Ascending aorta (tissue), 2 donors: ENCODE measurements at regions of chrX and their contacts with region 1.

Region 1: DNA sequence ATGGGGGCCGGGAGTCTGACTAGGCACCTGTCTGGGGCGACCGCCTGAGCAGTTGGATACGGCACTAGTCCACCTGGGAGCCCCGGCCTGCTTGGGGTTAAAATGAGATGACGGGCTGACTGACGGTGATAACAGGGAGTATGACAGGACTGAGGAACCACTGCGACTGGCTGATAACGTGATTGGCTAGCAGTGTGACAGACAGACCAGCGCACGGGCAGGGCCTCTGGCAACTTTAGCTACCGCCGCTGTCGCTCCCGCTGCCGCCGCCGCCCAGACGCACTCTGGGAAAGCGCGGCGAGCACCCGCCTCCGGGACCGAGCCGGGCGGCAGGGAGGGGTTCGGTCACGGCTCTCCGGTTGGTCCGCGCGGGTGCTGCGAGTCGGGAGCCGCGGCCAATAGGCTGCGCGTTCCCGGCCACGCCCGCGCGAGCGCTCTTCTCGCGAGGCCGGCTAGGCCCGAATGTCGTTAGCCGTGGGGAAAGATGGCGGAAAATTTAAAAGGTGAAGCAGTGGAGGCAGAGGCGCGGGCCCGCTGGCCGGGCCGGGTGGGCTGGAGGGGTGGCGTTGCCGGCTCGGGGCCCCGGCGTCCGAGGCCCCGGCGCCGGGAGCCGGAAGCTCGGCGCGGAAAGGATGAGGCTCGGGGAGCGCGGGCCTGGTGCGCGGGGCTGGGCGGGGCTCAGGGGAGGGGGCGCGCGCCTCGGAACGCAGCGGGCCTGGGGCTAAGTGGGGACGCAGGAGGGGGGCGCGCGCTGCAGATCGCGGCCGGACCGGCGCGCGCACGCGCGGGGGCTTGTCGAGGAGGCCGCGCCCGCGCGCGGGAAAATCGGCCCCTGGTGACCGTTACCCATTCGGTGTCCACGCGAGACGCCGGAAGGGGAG is at the start of gene SUV39H1:
- DNase-seq: peak; percentile 47 to 93
- H3K4me3 ChIP-seq: peak within 1 kb of the TSS; percentile 77 to 88
- H3K27ac ChIP-seq: peak within 1 kb of the TSS; percentile 87 to 92
- H3K4me1 ChIP-seq: no peaks in the 10 kb centered on the region
- H3K27me3 ChIP-seq: no peaks in the 10 kb centered on the region
- CTCF ChIP-seq: no peak
- total RNA-seq, gene SUV39H1: 0.21 TPM

Region 2: DNA sequence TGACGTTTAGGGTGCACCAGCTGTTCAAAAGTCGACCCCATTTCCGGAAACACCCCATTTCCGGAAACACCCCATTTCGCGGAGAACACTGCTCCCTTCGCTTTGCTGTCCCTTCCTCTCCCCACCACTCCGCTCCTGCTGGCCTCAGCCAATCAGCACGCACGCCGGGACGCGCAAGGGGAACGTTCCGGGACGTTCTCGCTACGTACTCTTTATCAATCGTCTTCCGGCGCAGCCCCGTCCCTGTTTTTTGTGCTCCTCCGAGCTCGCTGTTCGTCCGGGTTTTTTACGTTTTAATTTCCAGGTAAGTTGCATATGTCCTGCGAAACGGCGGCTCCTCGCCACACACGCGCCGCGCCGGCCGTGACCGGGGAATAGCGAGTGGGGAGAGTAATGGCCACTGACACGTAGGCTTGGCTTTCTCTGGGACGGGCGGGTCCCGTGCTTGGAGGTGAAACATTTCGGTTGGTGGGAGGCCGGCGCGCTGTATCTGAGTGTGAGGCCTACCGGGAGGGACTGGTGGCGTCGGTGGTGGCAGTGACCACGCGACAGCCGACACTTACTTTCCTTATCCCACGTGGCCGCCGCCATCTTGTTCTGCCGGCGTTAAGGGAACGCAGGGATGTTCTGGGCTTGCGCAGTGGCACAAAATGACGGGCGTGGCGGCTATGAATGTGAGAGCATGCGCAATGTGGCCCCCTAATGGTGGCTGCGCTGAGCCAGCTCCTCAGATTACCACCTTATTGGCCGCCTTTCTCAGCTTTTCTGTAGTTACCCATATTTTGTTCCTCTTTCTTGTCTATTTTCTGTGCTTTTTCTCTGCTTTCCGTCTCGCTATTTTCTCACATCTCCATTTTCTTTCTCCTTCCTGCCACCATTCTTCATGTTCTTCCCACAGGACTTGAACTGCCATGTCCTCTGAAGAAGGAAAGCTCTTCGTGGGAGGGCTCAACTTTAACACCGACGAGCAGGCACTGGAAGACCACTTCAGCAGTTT is 122.0 kb before region 1 on chrX and contains the start of gene RBM3:
- intact Hi-C with region 1: loop called (anchors 10 kb)
- DNase-seq: peak; percentile 77 to 95
- H3K4me3 ChIP-seq: peak within 1 kb of the TSS; percentile 71 to 78
- H3K27ac ChIP-seq: peak within 1 kb of the TSS; percentile 96 to 99
- H3K4me1 ChIP-seq: peaks cover 0 to 7% of the 10 kb centered on the region in 2 donors
- H3K27me3 ChIP-seq: no peaks in the 10 kb centered on the region
- CTCF ChIP-seq: peak in 2 of 3 experiments; percentile 30 to 36
- total RNA-seq, gene RBM3: 119 TPM

Region 3: DNA sequence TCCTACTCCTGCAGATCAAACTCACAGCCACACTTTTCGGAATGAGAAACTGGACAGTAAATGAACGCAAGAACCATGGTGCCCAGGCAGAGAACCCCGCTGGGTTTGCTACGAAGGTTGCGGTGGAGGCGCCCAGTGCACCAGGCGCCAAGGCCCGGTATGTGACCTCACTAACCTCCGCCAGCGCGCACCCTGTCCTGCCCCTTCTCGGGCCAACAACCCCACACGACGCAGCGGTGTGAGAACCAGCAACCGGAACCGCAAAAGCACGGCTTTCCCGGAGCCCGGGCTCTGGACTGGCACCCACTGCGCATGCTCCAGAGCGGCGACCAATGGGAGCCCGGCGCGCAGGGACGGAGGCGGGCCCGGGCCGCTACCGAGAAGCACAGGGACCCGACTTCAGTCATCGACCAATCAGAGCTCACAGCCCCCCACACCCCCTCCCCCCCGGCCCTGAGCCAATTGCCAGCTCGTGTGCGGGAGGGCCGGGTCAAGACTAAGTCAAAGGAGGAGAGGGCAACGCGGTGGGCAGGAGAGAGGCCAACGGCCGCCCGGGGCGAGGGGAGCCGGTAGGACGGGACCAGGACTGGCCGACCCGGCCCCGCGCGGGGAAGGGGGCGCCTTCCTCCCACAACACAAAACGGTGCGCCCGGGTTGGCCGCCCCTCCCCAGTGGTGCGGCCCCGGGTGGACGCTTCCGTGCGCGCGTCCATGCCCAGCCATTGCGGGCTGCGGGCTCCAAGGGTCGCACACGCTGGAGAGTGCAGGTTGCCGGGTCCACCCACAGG is 20.2 kb before region 1 on chrX:
- intact Hi-C with region 1: loop called (anchors 1 kb)
- DNase-seq: peak; percentile 61 to 91
- H3K4me3 ChIP-seq: peak overlapping the region; percentile 65 to 79
- H3K27ac ChIP-seq: peak overlapping the region; percentile 74 to 76
- H3K4me1 ChIP-seq: peaks cover 0 to 4% of the 10 kb centered on the region in 2 donors
- H3K27me3 ChIP-seq: no peaks in the 10 kb centered on the region
- CTCF ChIP-seq: no peak

Region 4: GRCh38 chrX:48737213-48737938 is 40.8 kb after region 1 on chrX:
- intact Hi-C with region 1: loop called (anchors 1 kb)
- DNase-seq: peak; percentile 67 to 94
- H3K4me3 ChIP-seq: peak overlapping the region; percentile 56 to 67
- H3K27ac ChIP-seq: peak overlapping the region; percentile 84 to 85
- H3K4me1 ChIP-seq: no peaks in the 10 kb centered on the region
- H3K27me3 ChIP-seq: no peaks in the 10 kb centered on the region
- CTCF ChIP-seq: no peak